ENCODE measurements at regions of chrX and their contacts with region 1.

Region 1: DNA sequence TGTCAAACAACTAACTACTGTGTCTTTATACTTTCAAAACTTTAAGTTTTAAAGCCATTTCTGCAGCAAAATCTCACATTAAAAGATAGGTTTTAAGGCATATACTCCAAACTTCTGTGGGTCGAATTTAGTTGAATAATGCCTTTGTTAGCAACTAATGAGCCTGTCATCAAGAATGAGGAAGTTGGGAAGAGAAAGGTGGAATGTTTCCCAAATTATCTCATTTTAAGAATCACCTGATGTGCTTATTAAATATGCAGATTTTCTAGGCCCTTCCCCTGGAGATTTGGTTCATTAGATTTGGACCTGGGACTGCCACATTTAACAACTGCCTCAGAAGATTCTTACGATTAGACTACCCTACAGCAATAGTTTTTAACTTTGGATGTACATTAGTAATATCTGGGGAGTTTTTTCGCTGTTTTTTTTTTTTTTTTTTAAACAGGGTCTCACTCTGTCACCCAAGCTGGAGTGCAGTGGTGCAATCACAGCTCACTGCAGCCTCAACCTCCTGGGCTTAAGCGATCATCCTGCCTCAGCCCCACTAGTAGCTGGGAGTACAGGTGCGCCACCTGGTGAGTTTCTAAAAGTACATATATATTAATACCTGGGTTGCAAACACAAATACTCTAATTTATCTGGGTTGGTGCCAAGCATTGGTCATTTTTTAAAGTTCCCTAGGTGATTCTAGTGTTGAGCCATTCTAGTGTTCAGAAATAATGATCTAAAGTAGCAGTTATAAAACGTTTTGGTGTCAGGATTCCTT is 16.1 kb upstream of the TASL start:
- DNase-seq: peak; percentile 33
- ATAC-seq: no peak
- H3K4me3 Mint-ChIP-seq: no peak overlapping the region
- H3K27ac Mint-ChIP-seq: no peak overlapping the region
- H3K4me1 Mint-ChIP-seq: peaks cover 22% of the 10 kb centered on the region
- H3K27me3 Mint-ChIP-seq: no peaks in the 10 kb centered on the region

Region 2: GRCh38 chrX:30327762-30328161 is 265.9 kb before region 1 on chrX:
- CTCF ChIA-PET with region 1: no interaction called
- POLR2A ChIA-PET with region 1: no interaction called
- intact Hi-C with region 1: no loop called
- DNase-seq: no peak
- ATAC-seq: no peak
- H3K4me3 Mint-ChIP-seq: no peak overlapping the region
- H3K27ac Mint-ChIP-seq: no peak overlapping the region
- H3K4me1 Mint-ChIP-seq: no peaks in the 10 kb centered on the region
- H3K27me3 Mint-ChIP-seq: peaks cover 4% of the 10 kb centered on the region

Region 3: DNA sequence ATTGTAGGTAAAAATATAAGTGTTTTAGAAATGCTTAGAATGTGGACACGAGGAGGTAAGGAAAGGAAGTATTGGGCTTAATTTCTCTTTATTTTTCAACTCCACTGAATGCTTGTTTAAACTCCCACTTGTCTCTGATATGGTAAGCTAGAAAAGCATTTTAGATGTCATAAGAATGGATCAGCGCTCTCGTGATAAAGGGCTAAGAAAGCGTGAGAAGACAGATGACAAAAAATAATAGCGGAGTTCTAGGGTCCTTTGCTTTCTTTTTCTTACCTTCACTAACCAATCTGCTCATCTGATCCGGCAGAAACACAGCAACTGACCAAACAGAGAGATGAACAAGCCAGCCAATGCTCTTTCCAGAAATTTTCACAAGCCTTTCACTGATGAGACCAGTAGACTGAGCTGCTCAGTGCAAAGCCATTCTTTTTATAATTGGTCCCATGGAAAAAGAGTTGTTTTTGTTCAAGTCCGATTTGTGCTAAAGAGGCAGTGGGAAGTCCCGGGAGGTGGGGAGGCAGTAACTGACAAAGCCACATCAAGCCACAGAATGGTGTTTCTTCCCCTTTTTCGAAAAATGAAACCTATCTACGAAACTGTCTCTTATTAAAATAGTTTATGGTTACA is 16.1 kb before region 1 on chrX and contains the start of gene TASL:
- CTCF ChIA-PET with region 1: interaction called, 4 read pairs
- POLR2A ChIA-PET with region 1: no interaction called
- intact Hi-C with region 1: loop called in 1 of 2 experiments (anchors 2 kb)
- DNase-seq: peak; percentile 39
- ATAC-seq: peak; percentile 89
- H3K4me3 Mint-ChIP-seq: peak within 1 kb of the TSS; percentile 80
- H3K27ac Mint-ChIP-seq: peak within 1 kb of the TSS; percentile 83
- H3K4me1 Mint-ChIP-seq: peaks cover 15% of the 10 kb centered on the region
- H3K27me3 Mint-ChIP-seq: no peaks in the 10 kb centered on the region
- total RNA-seq, gene TASL: 1.7 to 2.2 TPM